ENCODE measurements at regions of chr7 and their contacts with region 1.

Region 1: DNA sequence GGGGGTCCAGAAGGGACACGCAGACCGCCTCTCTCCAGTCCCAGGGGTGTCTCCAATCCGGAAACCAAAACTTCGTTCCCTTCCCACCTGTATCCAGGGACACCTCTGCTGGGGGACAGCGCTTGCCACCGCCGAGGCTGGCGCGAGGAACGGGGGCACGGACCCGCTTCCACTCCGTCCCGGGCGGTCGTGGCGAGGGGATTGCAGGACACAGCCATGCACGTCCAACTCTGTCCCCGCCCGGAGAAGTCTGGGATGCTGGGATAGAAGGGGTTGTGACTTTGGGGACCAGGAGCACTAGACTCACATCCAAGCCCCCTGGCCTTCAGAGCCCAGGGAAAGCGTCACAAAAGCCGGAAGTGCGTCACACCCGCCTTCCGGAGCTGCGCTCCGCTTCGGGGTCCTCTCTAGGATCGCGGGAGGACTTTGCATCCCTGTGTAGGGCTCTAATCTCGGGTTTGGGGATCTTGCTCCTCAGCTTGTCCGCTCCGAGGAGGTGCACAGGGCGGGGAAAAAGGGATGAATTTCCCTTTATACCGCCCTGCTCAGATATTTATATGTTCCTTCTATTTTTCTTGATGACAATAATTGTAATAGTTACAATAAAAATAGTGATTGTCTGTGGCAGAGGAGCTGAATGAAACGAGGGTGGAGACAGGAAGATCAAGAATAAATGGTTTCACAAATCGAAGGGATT is at the start of gene FAM200A:
- DNase-seq: peak; percentile 70 to 96 (median 87)
- ATAC-seq: peak; percentile 97
- H3K4me3 ChIP-seq: peak within 1 kb of the TSS; percentile 84 to 99
- H3K4me3 Mint-ChIP-seq: peak within 1 kb of the TSS; percentile 90
- H3K27ac ChIP-seq: peak within 1 kb of the TSS; percentile 91 to 99
- H3K27ac Mint-ChIP-seq: peak within 1 kb of the TSS; percentile 96
- H3K4me1 ChIP-seq: peaks cover 27% of the 10 kb centered on the region
- H3K4me1 Mint-ChIP-seq: peaks cover 39% of the 10 kb centered on the region
- H3K27me3 ChIP-seq: no peaks in the 10 kb centered on the region
- H3K27me3 Mint-ChIP-seq: no peaks in the 10 kb centered on the region
- CTCF ChIP-seq: no peak
- total RNA-seq, gene FAM200A: 2.7 to 3.3 TPM

Region 2: GRCh38 chr7:99616359-99617191 is 64.7 kb after region 1 on chr7 and contains the start of gene ZSCAN25:
- CTCF ChIA-PET with region 1: interaction called, 3 read pairs
- POLR2A ChIA-PET with region 1: interaction called, 29 read pairs
- intact Hi-C with region 1: loop called (anchors 1 to 2 kb)
- DNase-seq: peak; percentile 66 to 93 (median 86)
- ATAC-seq: peak; percentile 97
- H3K4me3 ChIP-seq: peak within 1 kb of the TSS; percentile 78 to 94
- H3K4me3 Mint-ChIP-seq: peak within 1 kb of the TSS; percentile 97
- H3K27ac ChIP-seq: peak within 1 kb of the TSS; percentile 86 to 87
- H3K27ac Mint-ChIP-seq: peak within 1 kb of the TSS; percentile 98
- H3K4me1 ChIP-seq: peaks cover 25% of the 10 kb centered on the region
- H3K4me1 Mint-ChIP-seq: peaks cover 45% of the 10 kb centered on the region
- H3K27me3 ChIP-seq: no peaks in the 10 kb centered on the region
- H3K27me3 Mint-ChIP-seq: no peaks in the 10 kb centered on the region
- CTCF ChIP-seq: no peak
- total RNA-seq, gene ZSCAN25: 54.1 to 54.7 TPM